PC-9 (cell line): ENCODE measurements at regions of chr5 and their contacts with region 1.

Region 1: GRCh38 chr5:37774912-37775483 is 64.8 kb downstream of the GDNF start:
- DNase-seq: no peak
- H3K4me3 ChIP-seq: no peak overlapping the region
- H3K27ac ChIP-seq: no peak overlapping the region
- H3K4me1 ChIP-seq: peaks cover 26% of the 10 kb centered on the region
- H3K27me3 ChIP-seq: no peaks in the 10 kb centered on the region
- CTCF ChIP-seq: peak; percentile 92

Region 2: GRCh38 chr5:37533851-37534250 is 241.1 kb before region 1 on chr5:
- CTCF ChIA-PET with region 1: interaction called, 13 read pairs
- POLR2A ChIA-PET with region 1: no interaction called
- intact Hi-C with region 1: loop called (anchors 1 kb)
- DNase-seq: peak; percentile 68 to 77
- H3K4me3 ChIP-seq: no peak overlapping the region
- H3K27ac ChIP-seq: peak overlapping the region; percentile 21
- H3K4me1 ChIP-seq: peaks cover 8% of the 10 kb centered on the region; the same call in 1 of the 2 replicates
- H3K27me3 ChIP-seq: no peaks in the 10 kb centered on the region
- CTCF ChIP-seq: no peak